Activated B cell treated with CpG ODN at 0.5 μM for 24 hours (primary cell): ENCODE measurements at regions of chr21 and their contacts with region 1.

Region 1: DNA sequence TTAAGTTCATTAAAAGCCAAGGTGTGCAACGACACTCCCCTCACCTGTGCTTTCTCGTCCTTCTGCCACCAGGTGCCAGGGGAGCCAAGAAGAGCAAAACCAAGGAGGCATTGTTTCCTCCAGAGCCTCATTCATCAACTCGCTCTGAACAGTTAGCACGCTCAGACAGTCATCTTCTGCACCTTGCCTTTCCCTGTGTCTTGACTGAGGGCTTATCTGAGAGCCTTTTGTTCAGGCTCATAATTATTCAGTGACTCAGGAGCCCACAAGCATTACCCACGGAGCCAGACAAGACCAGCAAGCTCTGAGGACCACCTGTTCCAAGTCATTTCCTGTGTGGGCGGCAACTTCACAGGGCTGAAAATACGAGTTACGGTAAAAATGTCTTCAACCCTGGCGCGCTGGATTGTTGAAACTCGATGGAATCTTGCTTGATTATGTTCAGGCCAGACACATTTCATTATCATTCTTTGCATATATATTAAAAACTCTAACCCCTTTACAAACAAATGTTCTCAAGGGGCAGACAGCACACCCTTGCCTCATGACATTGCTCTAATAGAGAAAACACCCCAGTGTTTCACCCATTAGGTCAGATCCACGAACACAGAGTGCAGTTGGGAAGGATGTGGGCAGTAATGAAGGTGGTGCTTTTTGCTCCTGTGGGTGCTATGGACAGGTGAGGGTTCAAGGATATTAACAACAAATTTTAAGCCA is 89.7 kb upstream of the RUNX1 start:
- DNase-seq: no peak
- ATAC-seq: peak; percentile 88
- H3K4me3 Mint-ChIP-seq: peak overlapping the region; percentile 62
- H3K27ac Mint-ChIP-seq: no peak overlapping the region
- H3K4me1 Mint-ChIP-seq: peaks cover 13% of the 10 kb centered on the region
- H3K27me3 Mint-ChIP-seq: peaks cover 2% of the 10 kb centered on the region
- CTCF ChIP-seq: no peak

Region 2: DNA sequence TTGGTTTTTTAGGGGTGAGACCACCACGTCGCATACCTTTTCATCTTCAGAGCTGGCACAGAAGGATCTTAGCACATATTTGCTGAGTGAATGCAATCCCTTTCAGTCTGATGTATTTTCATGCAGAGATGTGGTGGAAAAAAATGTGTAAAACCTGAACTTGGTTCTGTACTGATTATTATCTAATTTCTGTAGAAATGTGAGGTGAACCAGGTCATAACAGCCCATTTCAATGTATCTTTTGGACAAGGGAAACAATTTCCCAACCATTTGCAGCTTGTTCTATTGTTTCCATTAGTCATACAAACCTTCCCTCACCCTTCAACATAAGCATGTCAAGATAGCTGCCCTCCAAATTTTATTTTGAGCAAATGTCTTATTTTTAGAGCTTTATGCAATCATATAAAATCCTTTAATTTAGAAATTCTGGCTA is 42.9 kb before region 1 on chr21:
- CTCF ChIA-PET with region 1: no interaction called
- POLR2A ChIA-PET with region 1: no interaction called
- intact Hi-C with region 1: loop called (anchors 5 kb)
- DNase-seq: no peak
- ATAC-seq: no peak
- H3K4me3 Mint-ChIP-seq: no peak overlapping the region
- H3K27ac Mint-ChIP-seq: no peak overlapping the region
- H3K4me1 Mint-ChIP-seq: no peaks in the 10 kb centered on the region
- H3K27me3 Mint-ChIP-seq: peaks cover 6% of the 10 kb centered on the region
- CTCF ChIP-seq: no peak

Region 3: GRCh38 chr21:35204850-35205541 is 66.2 kb after region 1 on chr21:
- CTCF ChIA-PET with region 1: no interaction called
- POLR2A ChIA-PET with region 1: no interaction called
- intact Hi-C with region 1: loop called (anchors 5 kb)
- DNase-seq: no peak
- ATAC-seq: peak; percentile 51
- H3K4me3 Mint-ChIP-seq: peak overlapping the region; percentile 82
- H3K27ac Mint-ChIP-seq: peak overlapping the region; percentile 81
- H3K4me1 Mint-ChIP-seq: peaks cover 33% of the 10 kb centered on the region
- H3K27me3 Mint-ChIP-seq: no peaks in the 10 kb centered on the region
- CTCF ChIP-seq: no peak

Region 4: DNA sequence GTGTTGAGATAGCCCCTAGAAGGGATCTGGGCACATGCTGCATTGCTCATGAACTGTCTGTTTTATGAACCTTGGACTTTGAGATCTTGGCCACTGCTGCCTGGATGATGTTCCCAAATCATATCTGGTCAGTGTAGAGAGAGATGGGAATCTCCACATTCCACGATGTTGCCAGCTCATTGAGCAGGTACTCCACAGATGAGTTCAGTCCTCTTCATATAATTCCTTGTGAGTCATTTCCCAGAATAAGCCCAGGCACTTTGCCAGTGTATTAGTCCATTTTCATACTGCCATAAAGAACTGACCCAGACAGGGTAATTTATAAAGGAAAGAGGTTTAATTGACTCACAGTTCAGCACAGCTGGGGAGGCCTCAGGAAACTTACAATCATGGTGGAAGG is 164.3 kb after region 1 on chr21:
- CTCF ChIA-PET with region 1: no interaction called
- POLR2A ChIA-PET with region 1: interaction called, 10 read pairs
- intact Hi-C with region 1: no loop called
- DNase-seq: no peak
- ATAC-seq: no peak
- H3K4me3 Mint-ChIP-seq: no peak overlapping the region
- H3K27ac Mint-ChIP-seq: no peak overlapping the region
- H3K4me1 Mint-ChIP-seq: peaks cover 2% of the 10 kb centered on the region
- H3K27me3 Mint-ChIP-seq: peaks cover 7% of the 10 kb centered on the region
- CTCF ChIP-seq: no peak